A549 (cell line): ENCODE measurements at regions of chr17 and their contacts with region 1.

Region 1: GRCh38 chr17:50200457-50201275 is 765 bp downstream of the COL1A1 start:
- DNase-seq: peak; percentile 90 to 95
- ATAC-seq: peak; percentile 74 to 86
- H3K4me3 ChIP-seq: peak overlapping the region; percentile 47
- H3K27ac ChIP-seq: peak overlapping the region; percentile 77 to 90
- H3K4me1 ChIP-seq: peaks cover 44% of the 10 kb centered on the region
- CTCF ChIP-seq: peak; percentile 100
- EP300 ChIP-seq: no peak
- POLR2A ChIP-seq: no peak
- RAD21 ChIP-seq: peak; percentile 94 to 100

Region 2: GRCh38 chr17:50003911-50004310 is 196.8 kb before region 1 on chr17:
- CTCF ChIA-PET with region 1: no interaction called
- POLR2A ChIA-PET with region 1: no interaction called
- DNase-seq: no peak
- ATAC-seq: no peak
- H3K4me3 ChIP-seq: no peak overlapping the region
- H3K27ac ChIP-seq: no peak overlapping the region
- H3K4me1 ChIP-seq: no peaks in the 10 kb centered on the region
- CTCF ChIP-seq: no peak
- EP300 ChIP-seq: no peak
- POLR2A ChIP-seq: no peak
- RAD21 ChIP-seq: no peak

Region 3: DNA sequence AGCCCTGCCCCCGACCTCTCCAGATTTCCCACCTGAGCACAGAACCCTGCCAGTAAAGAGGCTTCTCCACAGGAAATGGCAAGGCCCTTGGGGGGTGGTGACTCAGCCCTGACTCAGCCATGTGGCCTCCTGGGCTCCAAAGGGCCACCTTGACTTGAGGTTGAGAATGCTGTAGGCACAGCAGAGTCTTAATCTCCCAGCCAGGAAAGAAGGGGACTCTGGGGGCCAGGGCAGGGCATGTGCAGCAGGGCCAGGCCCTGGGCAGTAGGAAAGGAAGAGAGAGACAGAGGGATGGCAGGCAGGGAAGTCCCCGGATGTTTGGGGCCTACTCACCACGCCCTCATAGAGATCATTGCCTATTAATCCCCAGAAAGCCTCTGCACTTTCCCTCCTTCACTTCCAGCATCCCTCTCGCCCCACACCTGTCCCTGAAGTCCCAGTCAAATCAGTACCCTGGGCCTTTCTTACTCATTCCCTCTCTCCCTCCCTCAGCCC is 149.5 kb before region 1 on chr17:
- CTCF ChIA-PET with region 1: no interaction called
- POLR2A ChIA-PET with region 1: no interaction called
- DNase-seq: peak; percentile 93 to 96
- ATAC-seq: peak; percentile 53 to 55
- H3K4me3 ChIP-seq: no peak overlapping the region
- H3K27ac ChIP-seq: peak overlapping the region; percentile 92 to 97
- H3K4me1 ChIP-seq: peaks cover 85% of the 10 kb centered on the region
- CTCF ChIP-seq: no peak; the same call in 2 of the 3 replicates
- EP300 ChIP-seq: peak; percentile 69 to 85; a peak in 3 of 5 replicates
- POLR2A ChIP-seq: no peak
- RAD21 ChIP-seq: peak; percentile 22 to 56; a peak in 3 of 5 replicates

Region 4: DNA sequence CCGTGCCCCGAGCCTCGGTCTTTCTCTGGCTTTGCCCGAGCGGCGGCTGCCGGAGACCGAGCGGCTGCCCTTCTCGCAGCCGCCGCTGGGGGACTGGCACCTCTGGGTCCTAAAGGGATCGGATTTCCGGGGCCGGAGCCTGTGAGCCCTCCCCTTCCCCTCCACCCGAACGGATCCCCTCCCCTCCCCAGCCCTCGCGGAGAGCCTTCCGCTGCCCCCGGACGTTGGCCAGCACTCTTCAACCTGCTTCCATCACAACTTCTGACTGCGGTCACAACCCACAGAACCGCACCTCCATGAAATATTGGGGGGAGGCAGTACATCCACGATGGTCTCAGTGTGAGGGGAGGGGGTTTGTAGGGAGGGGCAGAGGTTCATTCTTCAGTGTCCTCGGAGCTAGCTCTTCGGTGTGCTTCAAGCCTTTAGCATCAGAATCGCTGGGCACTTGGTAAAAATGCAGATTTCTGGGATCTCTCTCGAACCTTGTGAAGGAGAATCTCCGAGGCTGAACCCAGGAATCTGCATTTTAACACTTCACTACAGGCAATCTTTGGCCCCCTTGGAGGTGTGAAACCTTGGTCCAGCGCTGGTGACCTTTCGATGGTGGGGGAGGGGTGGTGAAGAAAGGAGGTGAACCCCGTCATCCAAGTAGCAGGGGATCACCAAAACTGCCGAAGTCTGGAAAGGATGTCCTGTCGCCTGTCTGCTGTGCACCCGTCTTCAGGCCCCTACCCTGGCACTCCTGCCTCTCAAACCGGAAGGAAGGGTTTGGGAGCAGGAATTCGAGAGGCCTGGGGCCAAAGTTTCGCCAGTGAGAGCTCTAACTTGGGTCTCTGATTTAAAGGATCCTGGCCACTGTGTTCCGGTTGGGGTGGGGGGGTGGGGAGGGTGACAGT is 49.4 kb before region 1 on chr17:
- CTCF ChIA-PET with region 1: interaction called, 26 read pairs
- POLR2A ChIA-PET with region 1: no interaction called
- DNase-seq: peak; percentile 96 to 97
- ATAC-seq: peak; percentile 71 to 78
- H3K4me3 ChIP-seq: peak overlapping the region; percentile 86
- H3K27ac ChIP-seq: peak overlapping the region; percentile 96 to 98
- H3K4me1 ChIP-seq: peaks cover 49% of the 10 kb centered on the region
- CTCF ChIP-seq: peak; percentile 36; the same call in 1 of the 3 replicates
- EP300 ChIP-seq: no peak
- POLR2A ChIP-seq: peak; percentile 73
- RAD21 ChIP-seq: no peak; a peak in 1 of 5 replicates

Region 5: DNA sequence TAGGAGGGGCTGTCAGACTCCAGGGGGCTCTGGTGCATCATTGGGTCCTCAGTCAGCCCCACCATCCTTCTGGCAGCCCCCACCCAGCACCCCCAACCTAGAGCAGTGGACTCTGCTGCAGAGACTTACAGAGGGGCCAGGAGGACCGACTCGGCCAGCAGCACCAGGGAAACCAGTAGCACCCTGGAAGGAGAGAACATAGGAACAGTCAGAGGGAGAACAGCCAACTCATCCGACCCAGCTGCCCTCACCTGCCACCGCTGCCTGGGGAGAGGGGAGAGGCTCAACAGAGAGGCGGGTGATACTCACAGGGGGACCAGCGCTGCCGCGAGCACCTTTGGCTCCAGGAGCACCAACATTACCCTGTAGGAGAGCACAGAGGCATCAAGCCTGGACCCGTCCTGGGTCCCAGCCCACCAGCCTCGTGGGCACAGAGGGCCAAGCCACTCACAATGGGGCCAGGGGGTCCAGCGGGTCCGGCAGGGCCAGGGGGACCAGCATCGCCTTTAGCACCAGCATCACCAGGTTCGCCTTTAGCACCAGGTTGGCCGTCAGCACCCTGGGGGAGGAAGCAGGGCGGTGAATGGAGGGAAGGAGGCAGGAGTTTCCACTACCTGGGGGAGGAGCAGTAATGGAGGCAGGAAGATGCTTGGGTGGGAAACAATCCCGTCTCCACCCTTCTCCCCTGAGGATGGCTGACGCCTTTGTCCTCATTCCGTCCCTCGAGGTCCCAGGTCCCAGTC is 10.9 kb before region 1 on chr17:
- CTCF ChIA-PET with region 1: interaction called, 32 read pairs
- POLR2A ChIA-PET with region 1: no interaction called
- DNase-seq: no peak
- ATAC-seq: no peak
- H3K4me3 ChIP-seq: no peak overlapping the region
- H3K27ac ChIP-seq: peak overlapping the region in 1 of 2 experiments; percentile 9; a peak in 1 of 6 replicates
- H3K4me1 ChIP-seq: peaks cover 4% of the 10 kb centered on the region
- CTCF ChIP-seq: no peak
- EP300 ChIP-seq: no peak
- POLR2A ChIP-seq: no peak
- RAD21 ChIP-seq: no peak

Region 6: GRCh38 chr17:50244771-50245170 is 44.1 kb after region 1 on chr17:
- CTCF ChIA-PET with region 1: interaction called, 15 read pairs
- POLR2A ChIA-PET with region 1: no interaction called
- DNase-seq: no peak
- ATAC-seq: no peak
- H3K4me3 ChIP-seq: no peak overlapping the region
- H3K27ac ChIP-seq: no peak overlapping the region
- H3K4me1 ChIP-seq: no peaks in the 10 kb centered on the region
- CTCF ChIP-seq: no peak
- EP300 ChIP-seq: no peak
- POLR2A ChIP-seq: no peak
- RAD21 ChIP-seq: no peak

Region 7: GRCh38 chr17:50297407-50297865 is 96.8 kb after region 1 on chr17:
- CTCF ChIA-PET with region 1: interaction called, 935 read pairs
- POLR2A ChIA-PET with region 1: interaction called, 4 read pairs
- DNase-seq: peak; percentile 81 to 90
- ATAC-seq: peak; percentile 93 to 99
- H3K4me3 ChIP-seq: no peak overlapping the region
- H3K27ac ChIP-seq: no peak overlapping the region
- H3K4me1 ChIP-seq: no peaks in the 10 kb centered on the region
- CTCF ChIP-seq: peak; percentile 99
- EP300 ChIP-seq: no peak
- POLR2A ChIP-seq: no peak
- RAD21 ChIP-seq: peak; percentile 100

Region 8: GRCh38 chr17:50478391-50479381 is 278.0 kb after region 1 on chr17 and contains the start of gene RSAD1:
- CTCF ChIA-PET with region 1: interaction called, 13 read pairs
- POLR2A ChIA-PET with region 1: interaction called, 5 read pairs
- DNase-seq: peak; percentile 85 to 96
- ATAC-seq: peak; percentile 78 to 89
- H3K4me3 ChIP-seq: peak within 1 kb of the TSS; percentile 65
- H3K27ac ChIP-seq: peak within 1 kb of the TSS; percentile 79 to 91
- H3K4me1 ChIP-seq: peaks cover 31% of the 10 kb centered on the region
- CTCF ChIP-seq: peak; percentile 100
- EP300 ChIP-seq: no peak
- POLR2A ChIP-seq: peak; percentile 90
- RAD21 ChIP-seq: peak; percentile 41 to 78
- polyA plus RNA-seq, gene RSAD1: 38.2 and 47.2 TPM in 2 replicates